ENCODE measurements at regions of chr7 and their contacts with region 1.

Region 1: DNA sequence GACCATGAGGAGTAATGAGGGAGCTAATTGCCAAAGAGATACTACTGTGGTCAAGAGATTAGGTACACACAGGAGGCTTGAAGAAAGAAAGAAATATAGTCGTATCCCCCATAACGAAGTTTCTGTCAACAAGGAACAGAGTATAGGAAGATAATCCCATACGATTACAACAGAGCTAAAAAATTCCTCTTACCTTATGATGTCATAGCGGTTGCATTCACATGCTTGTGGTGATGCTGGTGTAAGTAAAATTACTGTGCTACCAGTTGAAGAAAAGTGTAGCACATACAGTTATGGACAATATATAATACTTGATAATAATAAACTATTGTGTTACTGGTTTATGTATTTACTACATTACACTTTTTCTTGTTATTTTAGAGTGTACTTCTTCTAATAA is 51.6 kb upstream of the CASD1 start:
- DNase-seq: no peak
- ATAC-seq: no peak

Region 2: GRCh38 chr7:94223375-94224070 is 234.5 kb before region 1 on chr7:
- intact Hi-C with region 1: no loop called
- DNase-seq: no peak
- ATAC-seq: no peak

Region 3: DNA sequence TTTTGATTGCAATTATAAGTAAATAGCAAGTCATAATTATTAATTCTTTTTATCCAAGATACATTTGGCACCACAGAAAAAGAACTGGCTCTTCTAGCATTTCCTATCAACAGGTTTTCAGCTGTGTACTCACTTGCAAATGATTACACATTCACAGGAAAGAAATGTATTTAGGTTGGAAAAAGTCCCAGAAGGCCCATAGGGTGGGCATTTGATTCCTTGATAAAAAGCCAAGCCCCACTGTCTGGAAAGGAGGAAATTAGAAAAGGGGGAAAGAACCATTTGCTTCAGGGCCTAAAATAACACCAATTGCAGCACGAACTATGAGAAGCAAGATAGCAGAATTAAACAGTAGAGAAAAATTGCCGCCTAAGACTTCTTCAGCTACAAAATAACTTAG is 144.1 kb before region 1 on chr7:
- intact Hi-C with region 1: no loop called
- DNase-seq: no peak
- ATAC-seq: no peak

Region 4: GRCh38 chr7:94509879-94510581 is 52.0 kb after region 1 on chr7:
- intact Hi-C with region 1: loop called in 1 of 2 experiments (anchors 5 kb)
- DNase-seq: peak; percentile 65 to 81
- ATAC-seq: peak; percentile 63

Measured in left colon (tissue), 2 donors.